H1 (cell line): ENCODE measurements at regions of chr14 and their contacts with region 1.

Region 1: DNA sequence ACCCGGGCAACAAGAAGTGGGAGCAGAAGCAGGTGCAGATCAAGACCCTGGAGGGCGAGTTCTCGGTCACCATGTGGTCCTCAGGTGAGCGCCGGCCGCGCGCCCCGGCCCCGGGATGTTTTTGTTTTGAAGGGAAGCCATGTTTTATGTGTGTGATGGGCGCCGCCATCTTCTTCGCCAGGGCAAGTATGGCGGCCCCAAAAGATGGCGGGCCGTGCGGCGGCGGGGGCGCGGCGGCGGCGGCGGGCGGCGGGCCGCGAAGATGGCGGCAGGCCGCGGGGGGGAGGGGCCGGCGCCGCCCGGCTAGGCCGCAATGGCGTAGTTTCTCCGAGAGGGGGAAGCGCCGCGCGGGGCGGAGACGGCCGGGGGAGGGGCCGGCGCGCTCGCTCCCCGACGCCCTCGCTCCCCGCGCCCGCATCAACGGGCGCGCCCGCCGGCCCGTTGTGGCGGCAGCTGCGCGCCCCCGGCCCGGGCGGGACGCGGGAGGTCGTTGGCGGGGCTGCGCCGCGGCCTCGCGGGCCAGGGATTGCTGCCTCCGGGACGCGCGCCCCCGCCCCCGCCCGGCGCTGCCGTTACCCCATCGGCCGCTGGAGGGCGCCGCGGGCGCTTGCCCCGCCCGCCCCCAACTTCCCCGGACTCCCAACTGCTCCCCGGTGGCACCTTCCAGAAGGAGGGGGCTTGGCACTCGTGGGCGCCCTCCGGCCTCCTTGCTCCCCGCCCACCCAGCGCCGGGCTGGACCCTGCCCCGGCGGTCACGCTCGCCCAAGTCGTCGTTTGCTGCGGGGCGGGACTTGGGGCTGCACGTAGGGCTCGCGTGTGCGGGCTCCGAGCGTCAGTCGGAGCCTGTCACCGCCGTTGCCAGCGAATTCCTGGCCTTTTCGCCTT is 1.1 kb downstream of the YY1 start:
- DNase-seq: peak in 1 of 2 experiments; percentile 79
- H3K4me3 ChIP-seq: peak overlapping the region; percentile 87 to 100 (median 94)
- H3K27ac ChIP-seq: peak overlapping the region; percentile 82; the same call in 1 of the 2 replicates
- H3K4me1 ChIP-seq: peaks cover 2 to 14% (median 5%) of the 10 kb centered on the region in 4 experiments; a peak in 3 of 7 replicates
- H3K27me3 ChIP-seq: no peaks in the 10 kb centered on the region
- CTCF ChIP-seq: peak; percentile 41 to 73 (median 67)
- EP300 ChIP-seq: no peak
- POLR2A ChIP-seq: peak in 1 of 2 experiments; percentile 22; a peak in 1 of 3 replicates
- RAD21 ChIP-seq: peak in 1 of 2 experiments; percentile 31; a peak in 1 of 4 replicates

Region 2: GRCh38 chr14:100213956-100214774 is 25.9 kb before region 1 on chr14:
- CTCF ChIA-PET with region 1: interaction called, 5 read pairs
- POLR2A ChIA-PET with region 1: interaction called, 90 read pairs
- DNase-seq: peak; percentile 71 to 92
- H3K4me3 ChIP-seq: peak overlapping the region; percentile 67 to 98 (median 71)
- H3K27ac ChIP-seq: peak overlapping the region; percentile 90
- H3K4me1 ChIP-seq: peaks cover 4 to 8% (median 7%) of the 10 kb centered on the region in 4 experiments; a peak in 5 of 7 replicates
- H3K27me3 ChIP-seq: no peaks in the 10 kb centered on the region; a peak in 1 of 7 replicates
- CTCF ChIP-seq: no peak
- EP300 ChIP-seq: no peak
- POLR2A ChIP-seq: peak; percentile 92 to 94
- RAD21 ChIP-seq: no peak